Right ventricle myocardium inferior (tissue), 1 donor: ENCODE measurements at regions of chr4 and their contacts with region 1.

Region 1: GRCh38 chr4:26860157-26860921 is at the start of gene STIM2:
- DNase-seq: peak; percentile 98
- ATAC-seq: peak; percentile 94
- total RNA-seq, gene STIM2: 9.2 TPM

Region 2: DNA sequence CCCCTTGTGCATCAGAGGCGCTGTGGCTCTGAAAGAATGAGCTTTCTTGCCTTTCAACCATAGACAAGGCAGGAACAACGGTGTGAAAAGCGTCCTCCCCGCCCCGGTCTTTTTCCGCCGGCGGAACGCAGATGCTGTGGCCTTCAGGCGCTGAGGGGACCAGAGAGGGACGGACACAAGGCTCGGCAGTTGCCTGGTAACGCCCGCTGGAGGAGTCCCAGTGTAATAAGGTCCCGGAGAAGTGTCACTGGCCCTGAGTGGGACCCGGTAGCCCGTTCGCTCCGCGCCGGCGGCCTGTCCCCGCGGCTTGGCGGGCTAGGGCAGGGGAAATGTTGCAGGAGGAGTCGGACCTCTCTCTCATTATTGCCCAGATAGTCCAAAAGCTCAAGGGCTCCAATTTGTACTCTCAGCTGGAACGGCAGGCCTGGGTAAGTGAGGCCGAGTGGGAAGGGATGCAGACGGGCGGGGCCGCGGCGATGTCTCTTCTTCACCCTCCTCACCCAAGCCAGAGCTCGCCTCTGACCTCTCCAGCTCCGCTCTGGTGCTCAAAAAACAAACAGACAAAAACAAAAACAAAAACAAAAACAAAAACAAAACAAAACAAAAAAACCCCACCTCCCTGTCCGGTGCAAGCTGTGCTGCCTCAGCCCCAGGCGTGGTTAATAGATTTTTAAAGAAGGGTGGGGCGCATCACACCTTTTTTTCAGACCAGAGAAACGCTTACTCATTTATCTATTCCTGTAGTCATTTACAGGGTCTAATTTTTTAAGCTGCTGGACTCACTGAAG is 276.3 kb before region 1 on chr4 and contains the start of gene TBC1D19:
- intact Hi-C with region 1: loop called (anchors 2 kb)
- DNase-seq: peak; percentile 93
- ATAC-seq: peak; percentile 100
- total RNA-seq, gene TBC1D19: 8.8 TPM

Region 3: DNA sequence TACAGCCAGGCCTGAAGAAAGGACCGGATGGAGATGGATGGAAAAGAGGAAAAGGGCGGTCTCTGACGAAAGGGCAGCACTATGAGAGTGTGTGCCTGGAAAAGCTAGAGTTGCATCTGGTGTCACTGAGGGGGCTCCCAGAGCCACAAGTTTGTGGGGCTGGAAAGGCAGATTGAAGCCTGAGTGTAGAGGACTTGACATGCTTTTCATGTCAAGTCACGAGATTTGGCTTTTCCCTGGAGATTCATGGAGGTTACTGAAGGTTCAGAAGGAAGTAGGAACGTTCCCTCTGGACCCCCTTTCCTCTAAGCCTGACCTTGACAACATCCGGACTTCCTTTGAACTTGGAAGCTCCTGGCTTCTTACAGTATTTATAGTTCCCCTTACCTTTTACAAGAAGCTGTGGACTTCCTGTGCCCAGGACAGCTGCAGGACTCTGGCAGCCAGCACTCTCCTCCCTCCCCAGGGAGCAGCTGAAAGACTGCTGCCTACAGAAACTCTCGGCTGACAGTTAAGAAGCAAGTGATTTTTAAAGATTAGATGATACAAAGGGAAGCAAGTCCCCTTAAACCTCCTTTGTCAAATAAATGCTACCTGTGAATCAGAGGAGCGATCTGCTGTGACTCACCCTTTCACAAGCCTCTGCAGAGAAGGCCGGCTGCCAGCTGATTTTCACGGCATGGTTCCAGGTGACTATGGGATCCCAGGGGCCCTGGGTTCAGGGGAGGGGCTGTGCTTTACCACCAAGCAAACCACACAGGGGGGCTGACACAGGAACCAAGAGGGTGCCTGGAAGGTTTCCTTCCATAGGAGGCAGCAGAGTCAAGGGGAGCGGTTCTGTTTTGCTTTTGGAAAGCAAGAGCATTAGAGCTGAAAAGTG is 72.6 kb before region 1 on chr4:
- intact Hi-C with region 1: loop called (anchors 1 kb)
- DNase-seq: no peak
- ATAC-seq: peak; percentile 56

Region 4: DNA sequence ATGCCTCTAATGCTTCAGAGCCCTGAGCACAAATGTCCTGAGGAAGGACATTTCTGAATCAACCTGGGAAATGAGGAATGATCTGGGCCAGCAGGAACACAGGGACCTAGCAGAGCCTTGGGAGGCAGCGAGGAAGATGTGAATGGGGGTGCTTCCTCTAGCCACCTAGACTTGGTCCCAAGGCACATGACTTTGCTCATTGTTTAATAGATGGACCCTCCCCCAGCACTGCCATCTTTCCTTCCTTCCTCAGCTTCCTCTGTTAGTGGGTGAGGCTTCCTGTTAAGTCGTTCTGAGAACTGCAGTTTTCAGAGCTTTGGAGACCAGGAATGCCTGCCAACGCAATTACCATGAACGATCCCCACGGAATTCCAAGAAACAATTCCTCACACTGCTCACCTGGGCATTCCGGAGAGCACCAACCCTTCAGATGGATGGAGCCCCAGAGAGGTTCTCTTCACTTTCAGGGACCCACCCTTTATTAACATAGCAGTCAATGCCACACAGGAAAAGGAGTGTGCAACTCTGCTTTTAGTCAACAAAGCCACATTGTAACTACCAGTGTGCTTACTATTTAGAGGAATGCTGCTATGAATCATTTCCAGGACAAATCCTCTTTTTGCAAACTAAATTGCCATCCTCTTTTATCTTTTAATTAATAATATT is 48.2 kb before region 1 on chr4:
- intact Hi-C with region 1: loop called (anchors 5 kb)
- DNase-seq: no peak
- ATAC-seq: no peak

Region 5: GRCh38 chr4:26916195-26916594 is 55.9 kb after region 1 on chr4:
- intact Hi-C with region 1: no loop called
- DNase-seq: no peak
- ATAC-seq: no peak

Region 6: GRCh38 chr4:26930964-26931363 is 70.6 kb after region 1 on chr4:
- intact Hi-C with region 1: no loop called
- DNase-seq: no peak
- ATAC-seq: no peak

Region 7: DNA sequence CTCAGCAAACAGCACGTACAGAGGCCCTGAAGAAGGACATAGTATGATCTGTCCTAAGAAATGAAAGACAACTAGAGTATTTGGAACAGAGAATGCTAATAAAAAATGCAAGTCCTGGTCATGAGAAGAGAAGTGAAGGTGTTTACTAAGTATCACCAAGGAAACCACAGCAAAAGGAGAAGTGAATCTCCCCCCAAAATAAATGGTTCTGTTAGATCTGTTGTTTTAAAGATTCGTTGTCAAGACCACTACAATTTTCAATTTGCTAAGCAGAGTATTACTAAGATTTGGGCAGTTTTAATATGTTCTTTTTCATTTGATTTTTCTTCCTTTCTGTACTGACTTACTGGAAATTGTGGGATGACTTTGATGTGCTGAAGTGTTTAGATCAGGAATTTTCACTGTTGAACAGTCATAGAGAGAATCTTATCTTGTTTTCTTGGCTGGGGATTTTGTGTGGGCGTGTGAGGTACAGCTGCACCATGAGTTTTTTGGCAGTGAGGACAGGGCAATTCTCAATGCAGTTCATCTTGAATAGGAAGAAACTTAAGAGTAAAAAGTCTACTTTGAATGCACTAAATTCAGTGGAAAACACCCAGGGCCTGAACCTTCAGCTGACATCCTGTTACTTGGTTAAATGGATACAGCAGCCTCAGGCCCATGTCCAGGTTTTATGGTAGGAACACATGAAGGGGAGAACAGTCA is 132.5 kb after region 1 on chr4:
- intact Hi-C with region 1: loop called (anchors 5 kb)
- DNase-seq: no peak
- ATAC-seq: peak; percentile 92

Region 8: GRCh38 chr4:27010334-27010940 is 150.1 kb after region 1 on chr4:
- intact Hi-C with region 1: loop called (anchors 5 kb)
- DNase-seq: peak; percentile 49
- ATAC-seq: peak; percentile 57